K562 (cell line): ENCODE measurements at regions of chr1 and their contacts with region 1.

Region 1: GRCh38 chr1:14113841-14114567 is 414.0 kb downstream of the PRDM2 start:
- DNase-seq: peak; percentile 38 to 62 (median 50)
- ATAC-seq: peak; percentile 91
- H3K4me3 ChIP-seq: no peak overlapping the region
- H3K27ac ChIP-seq: no peak overlapping the region
- H3K4me1 ChIP-seq: no peaks in the 10 kb centered on the region
- H3K27me3 ChIP-seq: no peaks in the 10 kb centered on the region
- CTCF ChIP-seq: peak; percentile 68 to 82 (median 76)
- EP300 ChIP-seq: no peak
- POLR2A ChIP-seq: no peak
- RAD21 ChIP-seq: peak; percentile 77 to 90

Region 2: DNA sequence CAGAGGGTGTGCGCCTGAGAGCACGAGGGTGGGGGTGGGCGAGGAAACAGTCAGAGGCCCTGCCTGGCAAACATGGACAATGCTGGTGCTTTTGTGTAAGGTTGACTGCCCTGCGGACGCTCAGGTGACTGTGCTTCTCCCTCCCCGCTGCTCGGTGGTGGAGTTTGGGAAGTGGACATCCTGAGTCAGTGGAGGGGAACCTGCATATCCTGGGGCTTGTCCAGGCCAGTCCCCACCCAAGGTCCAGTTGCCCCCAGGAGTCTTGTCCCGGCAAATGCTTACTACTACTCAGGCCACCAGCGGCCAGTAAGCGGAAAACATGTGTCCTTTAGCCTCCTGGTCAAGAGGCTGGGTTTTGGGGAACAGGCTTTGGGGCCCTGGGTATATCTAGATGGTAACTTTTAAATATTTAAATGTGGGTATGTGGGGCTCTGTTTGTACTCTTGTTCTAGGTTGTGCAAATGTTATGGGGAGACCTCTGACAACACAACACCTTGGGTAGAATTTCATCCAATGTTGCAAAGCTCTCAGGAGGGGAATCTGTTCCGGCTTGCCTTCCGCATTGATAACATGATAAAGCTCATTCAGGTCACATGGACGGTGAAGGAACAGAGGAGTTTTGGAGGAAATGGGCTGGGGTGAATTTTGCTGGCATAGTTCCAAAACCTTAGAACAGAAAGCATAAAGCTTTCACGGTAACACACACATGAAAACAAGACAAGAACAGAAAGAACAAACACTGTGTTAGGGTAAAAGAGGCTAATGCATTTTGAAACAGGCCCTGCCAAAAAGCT is 49.2 kb before region 1 on chr1:
- CTCF ChIA-PET with region 1: no interaction called
- POLR2A ChIA-PET with region 1: no interaction called
- in situ Hi-C with region 1: no loop called
- intact Hi-C with region 1: no loop called
- DNase-seq: no peak
- ATAC-seq: no peak
- H3K4me3 ChIP-seq: no peak overlapping the region
- H3K27ac ChIP-seq: no peak overlapping the region
- H3K4me1 ChIP-seq: no peaks in the 10 kb centered on the region
- H3K27me3 ChIP-seq: peaks cover 2 to 21% of the 10 kb centered on the region in 2 experiments; a peak in 2 of 5 replicates
- CTCF ChIP-seq: no peak
- EP300 ChIP-seq: no peak
- POLR2A ChIP-seq: no peak
- RAD21 ChIP-seq: no peak

Region 3: GRCh38 chr1:14733048-14733778 is 619.2 kb after region 1 on chr1:
- CTCF ChIA-PET with region 1: no interaction called
- POLR2A ChIA-PET with region 1: no interaction called
- in situ Hi-C with region 1: no loop called
- intact Hi-C with region 1: loop called (anchors 10 kb)
- DNase-seq: no peak
- ATAC-seq: no peak
- H3K4me3 ChIP-seq: no peak overlapping the region
- H3K27ac ChIP-seq: no peak overlapping the region
- H3K4me1 ChIP-seq: peaks cover 0 to 6% of the 10 kb centered on the region in 2 experiments; a peak in 3 of 5 replicates
- H3K27me3 ChIP-seq: peaks cover 46 to 52% of the 10 kb centered on the region in 2 experiments
- CTCF ChIP-seq: no peak
- EP300 ChIP-seq: no peak
- POLR2A ChIP-seq: no peak
- RAD21 ChIP-seq: no peak

Region 4: GRCh38 chr1:14850566-14850965 is 736.6 kb after region 1 on chr1:
- CTCF ChIA-PET with region 1: no interaction called
- POLR2A ChIA-PET with region 1: no interaction called
- in situ Hi-C with region 1: loop called (anchors 25 kb)
- intact Hi-C with region 1: no loop called
- DNase-seq: peak; percentile 36 to 55 (median 38)
- ATAC-seq: peak; percentile 85
- H3K4me3 ChIP-seq: no peak overlapping the region
- H3K27ac ChIP-seq: no peak overlapping the region
- H3K4me1 ChIP-seq: peaks cover 0 to 6% of the 10 kb centered on the region in 2 experiments; a peak in 4 of 5 replicates
- H3K27me3 ChIP-seq: peaks cover 31 to 37% of the 10 kb centered on the region in 2 experiments
- CTCF ChIP-seq: peak; percentile 55 to 75 (median 74)
- EP300 ChIP-seq: no peak
- POLR2A ChIP-seq: no peak
- RAD21 ChIP-seq: peak; percentile 78 to 85

Region 5: GRCh38 chr1:15046487-15047165 is 932.6 kb after region 1 on chr1:
- CTCF ChIA-PET with region 1: interaction called, 11 read pairs
- POLR2A ChIA-PET with region 1: no interaction called
- in situ Hi-C with region 1: loop called (anchors 10 kb)
- intact Hi-C with region 1: loop called (anchors 5 kb)
- DNase-seq: peak; percentile 83 to 91 (median 88)
- ATAC-seq: peak; percentile 96
- H3K4me3 ChIP-seq: no peak overlapping the region
- H3K27ac ChIP-seq: no peak overlapping the region
- H3K4me1 ChIP-seq: no peaks in the 10 kb centered on the region
- H3K27me3 ChIP-seq: no peaks in the 10 kb centered on the region
- CTCF ChIP-seq: peak; percentile 89 to 96 (median 93)
- EP300 ChIP-seq: no peak
- POLR2A ChIP-seq: no peak
- RAD21 ChIP-seq: peak; percentile 87 to 96